Caco-2 (cell line): ENCODE measurements at regions of chr12 and their contacts with region 1.

Region 1: GRCh38 chr12:57008178-57008577 is 1.8 kb upstream of the ZBTB39 start:
- DNase-seq: peak in 1 of 2 experiments; percentile 61
- H3K4me3 ChIP-seq: no peak overlapping the region
- H3K4me3 Mint-ChIP-seq: no peak overlapping the region
- H3K27ac Mint-ChIP-seq: peak overlapping the region; percentile 34
- H3K4me1 ChIP-seq: peaks cover 17% of the 10 kb centered on the region
- H3K4me1 Mint-ChIP-seq: peaks cover 35% of the 10 kb centered on the region
- H3K27me3 ChIP-seq: no peaks in the 10 kb centered on the region
- H3K27me3 Mint-ChIP-seq: no peaks in the 10 kb centered on the region
- CTCF ChIP-seq: peak; percentile 49 to 71

Region 2: GRCh38 chr12:56941299-56942017 is 66.7 kb before region 1 on chr12:
- CTCF ChIA-PET with region 1: no interaction called
- POLR2A ChIA-PET with region 1: no interaction called
- intact Hi-C with region 1: no loop called
- DNase-seq: no peak
- H3K4me3 ChIP-seq: no peak overlapping the region
- H3K4me3 Mint-ChIP-seq: no peak overlapping the region
- H3K27ac Mint-ChIP-seq: peak overlapping the region; percentile 72
- H3K4me1 ChIP-seq: peaks cover 8% of the 10 kb centered on the region; the same call in 1 of the 2 replicates
- H3K4me1 Mint-ChIP-seq: peaks cover 10% of the 10 kb centered on the region
- H3K27me3 ChIP-seq: no peaks in the 10 kb centered on the region
- H3K27me3 Mint-ChIP-seq: no peaks in the 10 kb centered on the region
- CTCF ChIP-seq: no peak

Region 3: DNA sequence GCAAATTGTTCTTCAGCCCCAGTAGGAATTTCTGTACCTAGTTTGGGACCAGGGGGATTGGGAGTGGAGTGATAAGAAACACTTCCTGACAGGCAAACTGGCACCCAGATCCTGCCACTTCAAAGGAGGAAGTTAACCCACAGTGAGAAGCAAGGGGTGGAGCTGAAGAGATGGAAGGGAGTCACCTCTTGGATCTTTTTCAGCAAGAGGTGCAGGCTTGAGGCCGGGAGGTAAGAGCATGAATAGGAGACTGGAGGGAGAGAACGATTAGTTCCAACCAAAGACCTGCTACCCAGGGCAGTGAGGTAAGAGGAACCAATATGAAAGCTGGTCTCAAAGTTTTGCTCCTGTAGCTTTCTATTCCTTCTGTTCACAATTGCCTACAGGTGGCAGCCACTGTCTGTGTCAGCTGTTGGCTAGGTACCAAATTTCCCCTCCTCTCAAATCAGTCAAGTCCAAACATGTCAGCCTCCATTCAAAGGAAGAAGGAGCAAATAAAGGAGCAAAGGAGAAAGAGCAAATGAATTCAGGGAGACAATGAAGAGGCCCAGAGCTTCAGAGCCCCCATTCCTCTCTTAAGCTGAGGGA is 23.1 kb after region 1 on chr12:
- CTCF ChIA-PET with region 1: interaction called, 5 read pairs
- POLR2A ChIA-PET with region 1: no interaction called
- intact Hi-C with region 1: loop called (anchors 1 kb)
- DNase-seq: no peak
- H3K4me3 ChIP-seq: no peak overlapping the region
- H3K4me3 Mint-ChIP-seq: no peak overlapping the region
- H3K27ac Mint-ChIP-seq: no peak overlapping the region
- H3K4me1 ChIP-seq: no peaks in the 10 kb centered on the region
- H3K4me1 Mint-ChIP-seq: peaks cover 8% of the 10 kb centered on the region
- H3K27me3 ChIP-seq: no peaks in the 10 kb centered on the region
- H3K27me3 Mint-ChIP-seq: no peaks in the 10 kb centered on the region
- CTCF ChIP-seq: peak in 1 of 2 experiments; percentile 36

Region 4: GRCh38 chr12:57063991-57064685 is 56.0 kb after region 1 on chr12:
- CTCF ChIA-PET with region 1: interaction called, 7 read pairs
- POLR2A ChIA-PET with region 1: no interaction called
- intact Hi-C with region 1: loop called (anchors 1 kb)
- DNase-seq: no peak
- H3K4me3 ChIP-seq: no peak overlapping the region
- H3K4me3 Mint-ChIP-seq: no peak overlapping the region
- H3K27ac Mint-ChIP-seq: no peak overlapping the region
- H3K4me1 ChIP-seq: no peaks in the 10 kb centered on the region
- H3K4me1 Mint-ChIP-seq: no peaks in the 10 kb centered on the region
- H3K27me3 ChIP-seq: no peaks in the 10 kb centered on the region
- H3K27me3 Mint-ChIP-seq: no peaks in the 10 kb centered on the region
- CTCF ChIP-seq: no peak

Region 5: DNA sequence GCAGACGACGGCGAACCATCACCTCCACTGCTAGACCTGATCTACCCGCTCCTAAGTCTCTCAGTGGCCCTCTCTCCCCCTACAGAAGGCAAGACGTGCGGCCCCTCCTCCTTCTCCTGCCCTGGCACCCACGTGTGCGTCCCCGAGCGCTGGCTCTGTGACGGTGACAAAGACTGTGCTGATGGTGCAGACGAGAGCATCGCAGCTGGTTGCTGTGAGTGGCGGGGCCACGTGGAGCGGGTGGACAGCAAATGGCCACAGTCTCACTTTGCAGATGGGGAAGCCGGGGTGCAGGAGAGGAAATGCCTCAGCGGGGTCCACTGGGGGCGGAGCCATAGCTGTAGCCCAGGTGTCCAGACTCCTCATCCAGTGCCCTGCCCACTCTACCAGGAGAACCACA is 187.0 kb after region 1 on chr12:
- CTCF ChIA-PET with region 1: interaction called, 11 read pairs
- POLR2A ChIA-PET with region 1: no interaction called
- intact Hi-C with region 1: no loop called
- DNase-seq: no peak
- H3K4me3 ChIP-seq: no peak overlapping the region
- H3K4me3 Mint-ChIP-seq: no peak overlapping the region
- H3K27ac Mint-ChIP-seq: no peak overlapping the region
- H3K4me1 ChIP-seq: no peaks in the 10 kb centered on the region
- H3K4me1 Mint-ChIP-seq: no peaks in the 10 kb centered on the region
- H3K27me3 ChIP-seq: no peaks in the 10 kb centered on the region
- H3K27me3 Mint-ChIP-seq: no peaks in the 10 kb centered on the region
- CTCF ChIP-seq: no peak